Mammary epithelial cell (primary cell): ENCODE measurements at regions of chr10 and their contacts with region 1.

Region 1: GRCh38 chr10:100912605-100913469 is at the start of gene SLF2:
- DNase-seq: peak; percentile 96
- H3K4me3 ChIP-seq: peak within 1 kb of the TSS; percentile 83 to 97 (median 96)
- H3K27ac ChIP-seq: peak within 1 kb of the TSS; percentile 56
- H3K4me1 ChIP-seq: peaks cover 8% of the 10 kb centered on the region
- H3K27me3 ChIP-seq: no peaks in the 10 kb centered on the region
- CTCF ChIP-seq: no peak
- total RNA-seq, gene SLF2: 24.5 to 28.3 TPM

Region 2: GRCh38 chr10:100982951-100983830 is 70.4 kb after region 1 on chr10:
- CTCF ChIA-PET with region 1: no interaction called
- dilution Hi-C with region 1: loop called (anchors 5 kb)
- in situ Hi-C with region 1: no loop called
- intact Hi-C with region 1: no loop called
- DNase-seq: no peak
- H3K4me3 ChIP-seq: no peak overlapping the region
- H3K27ac ChIP-seq: no peak overlapping the region
- H3K4me1 ChIP-seq: peaks cover 8% of the 10 kb centered on the region
- H3K27me3 ChIP-seq: no peaks in the 10 kb centered on the region
- CTCF ChIP-seq: no peak